Left lung (tissue), 14 donors: ENCODE measurements at regions of chr10 and their contacts with region 1.

Region 1: DNA sequence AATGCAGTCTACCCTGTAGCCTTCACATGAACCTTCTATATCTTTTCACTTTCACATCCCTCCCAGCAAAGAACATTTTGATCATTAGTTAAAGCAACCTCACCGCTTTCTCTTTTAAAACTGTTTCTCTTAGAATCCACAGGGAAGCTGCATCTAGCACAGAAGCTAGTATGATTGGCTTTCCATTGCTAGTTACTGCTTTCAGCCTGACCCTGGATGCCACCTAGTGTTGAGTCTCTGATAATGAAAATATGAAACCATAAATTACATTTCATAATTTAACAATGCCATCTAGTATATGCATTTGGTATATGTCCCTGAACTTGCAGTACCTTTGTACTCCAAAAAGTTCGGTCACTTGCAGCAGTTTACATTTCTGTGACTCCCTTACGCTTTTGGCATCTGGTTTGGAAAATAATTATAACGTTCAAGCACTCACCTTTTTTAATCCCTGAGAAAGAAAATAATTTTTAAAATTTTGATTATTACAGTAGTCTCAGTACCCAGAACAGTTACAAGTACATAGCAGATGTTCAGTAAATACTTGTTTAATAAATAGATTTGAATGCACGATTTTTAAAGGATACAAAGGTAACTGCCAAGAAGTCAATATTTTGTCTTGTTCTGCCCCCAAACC is 22.7 kb downstream of the CISD1 start:
- DNase-seq: peak in 1 of 4 donors; percentile 56
- ATAC-seq: peak; percentile 93
- H3K4me3 ChIP-seq: no peak overlapping the region
- H3K27ac ChIP-seq: no peak overlapping the region
- H3K4me1 ChIP-seq: no peaks in the 10 kb centered on the region
- H3K27me3 ChIP-seq: no peaks in the 10 kb centered on the region
- CTCF ChIP-seq: peak; percentile 52 to 65

Region 2: DNA sequence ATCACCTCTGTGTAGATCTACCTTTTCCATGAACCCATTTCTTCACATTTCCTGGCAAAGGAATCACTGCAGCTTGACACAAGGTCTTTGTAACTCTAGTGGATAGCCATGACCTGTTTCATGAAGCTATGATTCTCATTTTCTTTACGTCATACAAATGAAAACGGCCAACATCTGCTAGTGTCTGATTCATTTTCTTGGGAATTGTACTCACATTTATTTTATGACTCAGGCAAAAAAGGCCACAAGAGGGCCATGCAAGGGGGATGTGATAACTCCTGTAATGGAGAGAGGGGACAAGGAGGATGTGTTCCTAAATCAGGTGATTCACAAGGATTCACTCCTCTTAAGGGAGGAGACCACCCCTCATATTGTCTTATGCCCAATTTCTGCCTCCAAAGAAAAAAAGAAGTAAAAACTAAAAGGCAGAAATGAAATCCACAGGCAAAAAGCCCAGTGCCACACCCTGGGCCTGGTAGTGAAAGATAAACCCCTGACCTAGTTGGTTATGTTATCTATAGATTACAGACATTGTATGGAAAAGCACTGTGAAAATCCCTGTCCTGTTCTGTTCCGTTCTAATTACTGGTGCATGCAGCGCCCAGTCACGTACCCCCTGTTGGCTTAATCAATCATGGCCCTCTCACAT is 273.8 kb before region 1 on chr10:
- intact Hi-C with region 1: no loop called
- DNase-seq: no peak
- ATAC-seq: no peak
- H3K4me3 ChIP-seq: no peak overlapping the region
- H3K27ac ChIP-seq: no peak overlapping the region
- H3K4me1 ChIP-seq: no peaks in the 10 kb centered on the region
- H3K27me3 ChIP-seq: no peaks in the 10 kb centered on the region
- CTCF ChIP-seq: no peak

Region 3: DNA sequence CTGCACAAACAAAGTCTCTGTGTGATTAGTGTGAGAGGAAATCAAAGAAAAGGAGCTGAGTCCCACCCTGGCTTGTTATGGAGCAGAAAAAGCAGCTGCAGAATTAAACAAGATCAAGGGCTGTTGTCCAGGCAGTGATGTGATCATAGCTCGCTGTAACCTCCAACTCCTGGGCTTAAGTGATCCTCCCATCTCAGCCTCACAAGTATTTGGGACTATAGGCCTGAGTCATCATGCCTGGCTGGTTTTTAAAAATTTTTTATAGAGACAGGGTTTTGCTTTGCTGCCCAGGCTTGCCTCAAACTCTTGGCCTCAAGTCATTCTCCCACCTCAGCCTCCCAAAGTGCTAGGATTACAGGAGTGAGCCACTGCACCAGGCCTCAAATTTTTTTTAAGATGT is 112.8 kb before region 1 on chr10:
- intact Hi-C with region 1: loop called in 1 of 2 experiments (anchors 2 kb)
- DNase-seq: no peak
- ATAC-seq: no peak
- H3K4me3 ChIP-seq: no peak overlapping the region
- H3K27ac ChIP-seq: no peak overlapping the region
- H3K4me1 ChIP-seq: no peaks in the 10 kb centered on the region
- H3K27me3 ChIP-seq: no peaks in the 10 kb centered on the region
- CTCF ChIP-seq: no peak

Region 4: GRCh38 chr10:58209669-58210068 is 82.0 kb before region 1 on chr10:
- intact Hi-C with region 1: no loop called
- DNase-seq: peak in 2 of 4 donors; percentile 22 to 41
- ATAC-seq: peak; percentile 27
- H3K4me3 ChIP-seq: no peak overlapping the region
- H3K27ac ChIP-seq: no peak overlapping the region
- H3K4me1 ChIP-seq: no peaks in the 10 kb centered on the region
- H3K27me3 ChIP-seq: no peaks in the 10 kb centered on the region
- CTCF ChIP-seq: no peak